Left ventricle myocardium superior (tissue), 1 donor: ENCODE measurements at regions of chr6 and their contacts with region 1.

Region 1: DNA sequence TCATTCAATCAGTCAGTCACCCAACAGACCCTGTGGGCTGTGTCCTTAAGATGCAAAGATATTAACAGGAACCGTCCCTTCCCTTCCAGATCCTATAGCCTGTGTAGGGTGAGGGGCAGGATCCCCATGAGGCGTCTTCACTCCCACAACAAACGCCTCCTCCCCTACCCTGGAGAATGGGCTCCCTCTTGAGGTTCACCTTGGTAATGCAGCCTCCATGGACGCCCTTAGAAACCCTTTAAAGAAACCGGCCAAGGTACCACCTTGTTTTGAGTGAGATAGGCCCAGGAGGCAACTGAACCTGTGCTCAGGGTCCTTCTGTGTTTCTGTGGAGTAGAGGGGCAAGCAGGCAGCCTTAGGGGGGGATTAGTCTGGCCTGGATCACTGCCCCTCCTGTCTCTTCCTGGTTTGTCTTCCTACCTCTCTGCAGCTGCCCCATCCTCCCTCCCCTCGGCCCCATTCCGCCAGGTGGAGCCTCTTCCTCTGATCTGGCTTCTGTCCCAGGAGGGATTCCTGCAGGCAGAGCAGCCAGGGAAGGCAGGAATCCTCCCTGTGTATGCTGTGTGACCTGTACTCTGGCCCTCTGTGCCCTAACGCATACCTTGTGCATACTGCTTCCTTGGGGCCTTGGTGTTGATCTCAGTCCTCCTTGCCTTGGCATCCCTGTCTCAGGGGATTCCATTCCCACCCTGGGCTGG is 6.6 kb upstream of the GUCA1A start:
- DNase-seq: peak; percentile 45
- ATAC-seq: peak; percentile 85

Region 2: DNA sequence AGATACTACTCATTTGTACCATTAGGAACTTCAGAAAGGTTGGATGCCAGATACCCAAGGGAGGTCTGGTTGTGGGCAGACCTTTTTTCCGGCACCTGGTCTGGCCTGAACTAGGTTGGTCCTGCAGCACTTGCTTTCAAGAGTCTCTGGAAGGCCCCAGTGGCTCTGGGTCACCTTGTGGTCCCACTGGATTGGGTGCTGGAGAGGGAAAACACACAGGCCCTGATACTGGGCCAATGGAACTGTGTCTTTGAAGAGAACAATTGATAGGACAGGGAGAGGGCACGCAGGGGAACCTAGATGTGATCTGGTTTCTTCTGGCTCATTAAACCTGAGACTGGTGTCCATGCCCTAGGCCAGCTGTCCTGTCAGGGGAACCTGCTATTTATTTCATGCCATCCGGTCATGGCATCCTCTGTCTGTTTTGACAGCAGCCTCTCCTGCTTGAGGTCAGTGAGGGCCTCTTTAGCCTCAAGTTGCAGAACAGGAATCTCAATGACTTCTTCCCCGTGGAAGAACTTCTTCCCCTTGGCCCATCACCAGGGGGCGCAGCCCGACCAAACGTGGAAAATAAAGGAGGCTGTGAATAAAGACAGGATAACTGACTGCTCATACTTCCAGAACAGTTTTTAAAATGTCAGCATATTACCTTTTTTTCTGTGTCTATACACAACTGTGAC is 91.3 kb before region 1 on chr6:
- intact Hi-C with region 1: loop called (anchors 5 kb)
- DNase-seq: peak; percentile 86
- ATAC-seq: peak; percentile 65